Calu3 (cell line): ENCODE measurements at regions of chr9 and their contacts with region 1.

Region 1: GRCh38 chr9:113506090-113506589 is 42.6 kb downstream of the RGS3 start:
- DNase-seq: no peak
- H3K4me3 Mint-ChIP-seq: no peak overlapping the region
- H3K27ac Mint-ChIP-seq: no peak overlapping the region
- H3K4me1 Mint-ChIP-seq: peaks cover 42% of the 10 kb centered on the region
- H3K27me3 Mint-ChIP-seq: no peaks in the 10 kb centered on the region
- CTCF ChIP-seq: no peak

Region 2: GRCh38 chr9:113548221-113549041 is 42.3 kb after region 1 on chr9:
- CTCF ChIA-PET with region 1: no interaction called
- intact Hi-C with region 1: loop called (anchors 1 kb)
- DNase-seq: peak; percentile 68
- H3K4me3 Mint-ChIP-seq: no peak overlapping the region
- H3K27ac Mint-ChIP-seq: peak overlapping the region; percentile 94
- H3K4me1 Mint-ChIP-seq: peaks cover 17% of the 10 kb centered on the region
- H3K27me3 Mint-ChIP-seq: no peaks in the 10 kb centered on the region
- CTCF ChIP-seq: no peak